Activated naive CD4-positive, alpha-beta T cell treated with anti-CD3 and anti-CD28 coated beads for 36 hours (primary cell): ENCODE measurements at regions of chr10 and their contacts with region 1.

Region 1: GRCh38 chr10:21953585-21954057 is 49.9 kb downstream of the DNAJC1 start:
- DNase-seq: no peak
- H3K4me3 Mint-ChIP-seq: no peak overlapping the region
- H3K27ac Mint-ChIP-seq: no peak overlapping the region
- H3K4me1 Mint-ChIP-seq: peaks cover 3% of the 10 kb centered on the region
- H3K27me3 Mint-ChIP-seq: no peaks in the 10 kb centered on the region

Region 2: DNA sequence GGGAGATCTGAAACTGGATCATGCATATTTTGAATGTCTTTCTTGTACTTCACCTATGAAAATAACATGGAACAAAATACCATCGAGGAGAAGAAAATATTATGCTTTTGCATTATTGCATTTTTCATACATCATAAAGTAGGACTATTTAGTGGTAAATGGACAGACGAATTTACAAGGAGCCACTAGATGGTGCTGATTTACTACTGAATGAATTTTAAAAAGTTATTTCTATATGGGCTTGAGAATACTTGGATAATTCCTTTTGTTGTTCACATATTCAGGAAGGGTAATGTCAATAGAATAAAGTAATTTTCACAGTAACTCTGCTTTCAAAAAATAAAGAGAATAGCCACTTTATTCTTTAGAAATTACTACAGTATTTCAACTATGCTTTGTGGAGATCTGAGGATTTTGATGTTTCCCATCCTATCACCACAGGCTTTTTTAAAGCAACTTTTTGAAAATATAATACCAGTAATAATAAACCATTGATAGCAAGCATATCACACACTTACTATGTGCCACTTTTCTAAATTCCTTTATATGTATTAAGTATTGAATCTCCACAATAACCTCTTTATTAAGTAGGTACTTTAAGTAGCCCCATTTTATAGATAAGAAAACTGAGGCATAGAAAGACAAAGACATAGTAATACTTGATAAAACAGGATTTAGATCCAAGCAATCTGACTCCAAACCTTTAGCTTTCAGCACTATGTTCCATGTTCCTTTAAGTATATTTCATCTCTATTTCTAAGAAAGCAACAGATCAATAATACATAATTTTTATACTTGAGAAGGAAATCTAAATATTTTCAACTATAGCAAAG is 1095.1 kb before region 1 on chr10:
- CTCF ChIA-PET with region 1: no interaction called
- intact Hi-C with region 1: loop called (anchors 2 kb)
- DNase-seq: no peak
- H3K4me3 Mint-ChIP-seq: no peak overlapping the region
- H3K27ac Mint-ChIP-seq: no peak overlapping the region
- H3K4me1 Mint-ChIP-seq: no peaks in the 10 kb centered on the region
- H3K27me3 Mint-ChIP-seq: no peaks in the 10 kb centered on the region

Region 3: DNA sequence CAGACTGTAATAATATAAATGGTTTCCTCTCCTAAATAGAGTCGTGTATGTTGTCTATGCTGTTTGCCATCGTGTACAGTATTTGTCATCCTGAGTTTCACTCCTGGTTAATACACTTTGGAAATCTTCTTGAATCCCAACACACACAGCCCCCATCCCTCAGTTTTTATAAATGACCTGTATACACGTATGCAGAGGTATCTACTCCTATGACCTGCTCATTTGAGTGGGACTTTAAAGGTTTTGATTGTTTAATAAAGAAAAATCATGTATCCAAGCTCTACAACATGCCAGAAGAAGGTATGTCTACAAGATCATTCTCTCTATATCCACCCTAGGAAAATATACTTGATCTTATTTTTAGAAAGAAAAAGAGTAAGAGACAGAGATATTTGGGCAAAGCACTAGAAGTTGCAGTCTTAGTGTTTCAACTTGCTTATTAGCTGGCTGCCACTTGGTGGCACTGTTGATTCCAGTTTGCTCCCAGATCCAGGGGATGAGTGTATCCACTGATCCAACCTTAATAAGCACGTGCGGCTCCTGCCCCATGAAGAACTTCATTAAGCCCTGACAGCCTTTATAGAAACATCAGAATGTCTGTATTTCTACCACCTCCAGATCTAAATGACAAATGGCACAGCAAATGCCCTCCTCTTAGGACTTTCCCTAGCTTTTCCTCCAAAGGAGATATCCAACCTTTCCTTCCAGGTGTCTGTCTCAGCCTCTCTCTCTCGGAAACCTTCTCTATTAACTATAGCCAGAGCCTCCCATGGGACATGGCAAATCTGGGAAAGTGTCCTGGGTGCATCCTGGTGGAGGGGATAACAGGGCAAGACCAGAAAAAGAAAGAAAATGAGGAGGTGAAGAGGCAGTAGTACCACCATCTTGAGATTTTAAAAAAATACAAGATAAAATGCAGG is 875.0 kb before region 1 on chr10:
- CTCF ChIA-PET with region 1: no interaction called
- intact Hi-C with region 1: loop called (anchors 1 kb)
- DNase-seq: peak; percentile 54
- H3K4me3 Mint-ChIP-seq: no peak overlapping the region
- H3K27ac Mint-ChIP-seq: no peak overlapping the region
- H3K4me1 Mint-ChIP-seq: no peaks in the 10 kb centered on the region
- H3K27me3 Mint-ChIP-seq: peaks cover 5% of the 10 kb centered on the region

Region 4: GRCh38 chr10:21173812-21174714 is 779.6 kb before region 1 on chr10:
- CTCF ChIA-PET with region 1: no interaction called
- intact Hi-C with region 1: loop called (anchors 5 kb)
- DNase-seq: peak; percentile 32
- H3K4me3 Mint-ChIP-seq: peak overlapping the region; percentile 55
- H3K27ac Mint-ChIP-seq: no peak overlapping the region
- H3K4me1 Mint-ChIP-seq: peaks cover 11% of the 10 kb centered on the region
- H3K27me3 Mint-ChIP-seq: peaks cover 45% of the 10 kb centered on the region

Region 5: GRCh38 chr10:21278491-21279239 is 675.0 kb before region 1 on chr10:
- CTCF ChIA-PET with region 1: interaction called, 5 read pairs
- intact Hi-C with region 1: loop called (anchors 1 kb)
- DNase-seq: peak; percentile 92
- H3K4me3 Mint-ChIP-seq: no peak overlapping the region
- H3K27ac Mint-ChIP-seq: no peak overlapping the region
- H3K4me1 Mint-ChIP-seq: no peaks in the 10 kb centered on the region
- H3K27me3 Mint-ChIP-seq: no peaks in the 10 kb centered on the region

Region 6: DNA sequence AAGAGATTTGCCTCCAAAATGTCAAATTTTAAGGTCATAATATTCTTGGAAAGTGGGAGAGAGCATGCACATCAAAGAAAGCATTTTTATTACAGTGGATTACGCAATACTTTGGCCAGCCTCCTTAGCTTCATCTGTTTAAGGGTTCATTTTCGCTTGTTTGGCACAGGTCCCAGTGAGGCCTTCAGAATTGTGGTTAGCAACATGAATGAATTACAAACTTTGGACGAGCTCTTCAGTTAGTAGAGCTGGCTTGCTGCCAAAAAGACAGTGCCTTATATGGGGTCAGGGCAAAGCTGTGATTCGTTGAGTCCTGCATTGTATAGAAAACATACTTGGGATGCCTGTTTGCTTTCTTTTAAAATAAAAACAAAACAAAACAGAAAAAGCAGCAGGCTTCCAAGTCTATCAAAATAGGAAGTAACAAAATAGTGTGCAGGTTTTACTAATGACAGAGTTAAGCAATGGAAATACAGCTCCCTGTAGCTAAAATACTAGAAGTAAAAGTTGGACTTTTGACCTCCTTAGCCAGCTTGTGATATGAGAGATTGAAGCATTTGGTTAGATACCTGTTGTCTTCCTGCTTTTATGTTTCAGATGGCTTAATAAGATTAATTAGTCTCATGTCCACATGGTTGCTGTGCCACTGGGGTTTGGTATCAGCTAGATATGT is 228.8 kb before region 1 on chr10:
- CTCF ChIA-PET with region 1: no interaction called
- intact Hi-C with region 1: loop called (anchors 5 kb)
- DNase-seq: peak; percentile 72
- H3K4me3 Mint-ChIP-seq: no peak overlapping the region
- H3K27ac Mint-ChIP-seq: no peak overlapping the region
- H3K4me1 Mint-ChIP-seq: peaks cover 27% of the 10 kb centered on the region
- H3K27me3 Mint-ChIP-seq: no peaks in the 10 kb centered on the region

Region 7: DNA sequence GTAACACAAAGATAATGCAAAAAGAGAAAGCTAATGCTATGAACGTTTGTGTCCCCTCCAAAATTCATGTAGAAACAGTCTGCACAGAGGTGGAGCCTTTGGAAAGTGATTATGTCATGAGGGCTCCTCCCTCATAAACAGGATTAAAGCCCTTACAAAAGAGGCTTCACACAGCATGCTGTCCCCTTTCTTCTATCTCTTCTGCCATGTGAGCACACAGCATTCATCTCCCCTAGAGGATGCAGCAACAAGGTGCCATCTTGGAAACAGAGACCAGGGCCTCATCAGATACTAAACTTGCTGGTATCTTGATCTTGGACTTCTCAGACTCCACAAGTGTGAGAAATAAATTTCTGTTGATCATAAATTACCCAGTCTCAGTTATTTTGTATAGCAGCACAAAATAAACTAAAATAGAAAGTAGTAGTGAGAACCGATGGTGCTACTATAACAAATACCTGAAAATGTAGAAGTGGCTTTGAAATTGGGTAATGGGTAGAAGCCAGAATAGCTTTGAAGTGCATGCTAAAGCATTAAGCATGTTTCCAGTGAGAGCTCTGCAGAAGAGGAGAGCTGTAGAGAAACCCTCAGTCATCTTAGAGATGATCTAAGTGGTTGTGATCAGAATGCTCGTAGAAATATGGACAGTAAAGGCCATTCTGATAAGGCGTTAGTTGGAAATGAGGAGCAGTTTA is 58.8 kb before region 1 on chr10:
- CTCF ChIA-PET with region 1: no interaction called
- intact Hi-C with region 1: no loop called
- DNase-seq: no peak
- H3K4me3 Mint-ChIP-seq: no peak overlapping the region
- H3K27ac Mint-ChIP-seq: no peak overlapping the region
- H3K4me1 Mint-ChIP-seq: peaks cover 8% of the 10 kb centered on the region
- H3K27me3 Mint-ChIP-seq: no peaks in the 10 kb centered on the region

Region 8: DNA sequence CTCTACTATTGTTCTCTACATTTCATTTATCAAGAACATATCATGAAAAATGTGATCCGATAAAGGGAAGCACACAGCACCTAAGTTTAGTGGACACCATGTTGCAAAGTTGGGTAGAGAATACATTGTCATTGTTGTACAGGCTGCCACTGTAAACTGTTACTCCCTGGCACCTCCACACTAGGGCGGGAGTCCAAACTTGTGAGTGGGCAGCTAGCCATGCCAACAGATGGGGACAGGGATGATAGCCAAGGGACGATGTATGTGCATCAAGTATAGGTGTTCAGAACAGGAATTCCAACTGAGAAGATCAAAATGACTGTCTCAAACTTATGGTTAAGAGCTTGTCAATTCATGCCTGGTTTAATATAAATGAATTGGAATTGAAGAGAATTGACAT is 331.5 kb after region 1 on chr10:
- CTCF ChIA-PET with region 1: no interaction called
- intact Hi-C with region 1: no loop called
- DNase-seq: no peak
- H3K4me3 Mint-ChIP-seq: no peak overlapping the region
- H3K27ac Mint-ChIP-seq: no peak overlapping the region
- H3K4me1 Mint-ChIP-seq: no peaks in the 10 kb centered on the region
- H3K27me3 Mint-ChIP-seq: peaks cover 3% of the 10 kb centered on the region

Region 9: GRCh38 chr10:22894714-22895113 is 941.1 kb after region 1 on chr10:
- CTCF ChIA-PET with region 1: no interaction called
- intact Hi-C with region 1: no loop called
- DNase-seq: no peak
- H3K4me3 Mint-ChIP-seq: no peak overlapping the region
- H3K27ac Mint-ChIP-seq: no peak overlapping the region
- H3K4me1 Mint-ChIP-seq: no peaks in the 10 kb centered on the region
- H3K27me3 Mint-ChIP-seq: no peaks in the 10 kb centered on the region